Upper lobe of right lung (tissue), 1 donor: ENCODE measurements at regions of chr9 and their contacts with region 1.

Region 1: DNA sequence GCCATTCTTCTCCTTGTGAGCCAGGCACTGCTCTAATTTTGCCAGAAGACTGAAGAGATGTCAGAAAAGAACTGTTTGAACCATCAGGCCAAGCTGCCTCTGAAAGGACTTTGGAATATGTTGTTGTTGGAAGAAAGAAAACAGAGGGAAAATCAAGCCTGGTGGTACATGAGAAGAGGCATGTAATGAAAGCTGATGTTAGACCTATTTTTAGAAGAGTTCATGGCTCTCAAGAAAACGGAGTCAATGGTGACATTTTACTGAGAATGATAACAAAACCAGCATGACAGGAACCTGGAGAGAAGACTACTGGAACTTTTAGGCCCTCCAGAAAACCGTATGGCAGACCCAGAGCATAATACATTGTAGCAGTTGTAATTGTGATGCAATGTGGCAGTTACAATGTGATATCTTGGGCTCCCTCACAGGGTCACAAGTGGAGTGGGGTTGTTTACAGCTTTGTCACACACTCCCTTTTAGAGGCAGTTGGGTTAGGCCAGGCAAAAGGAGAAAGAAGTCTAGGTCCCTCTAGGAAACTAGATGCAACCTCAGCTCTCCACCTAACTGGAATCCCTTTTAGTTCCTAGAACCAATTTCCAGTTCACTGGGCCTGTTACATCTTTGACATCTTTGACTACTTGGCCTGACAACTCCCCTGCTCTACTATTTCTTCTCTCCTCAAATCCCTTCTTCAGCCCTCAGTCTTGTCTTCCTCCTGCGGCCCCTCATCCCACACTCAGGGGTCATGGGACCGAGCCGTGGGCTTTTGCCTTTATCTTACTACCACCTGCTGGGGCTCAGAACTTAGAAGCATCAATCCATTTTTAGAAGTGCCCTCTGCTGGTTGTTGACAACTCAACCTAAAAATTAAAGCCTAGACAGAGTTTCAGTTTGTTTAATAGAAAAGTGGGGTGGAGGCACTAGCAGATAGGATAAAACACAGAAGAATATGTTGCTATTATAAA is 61.2 kb upstream of the JAK2 start:
- DNase-seq: no peak
- ATAC-seq: peak; percentile 45
- H3K4me3 ChIP-seq: no peak overlapping the region
- H3K27ac ChIP-seq: no peak overlapping the region
- H3K4me1 ChIP-seq: peaks cover 4% of the 10 kb centered on the region
- H3K27me3 ChIP-seq: no peaks in the 10 kb centered on the region
- CTCF ChIP-seq: peak; percentile 33

Region 2: DNA sequence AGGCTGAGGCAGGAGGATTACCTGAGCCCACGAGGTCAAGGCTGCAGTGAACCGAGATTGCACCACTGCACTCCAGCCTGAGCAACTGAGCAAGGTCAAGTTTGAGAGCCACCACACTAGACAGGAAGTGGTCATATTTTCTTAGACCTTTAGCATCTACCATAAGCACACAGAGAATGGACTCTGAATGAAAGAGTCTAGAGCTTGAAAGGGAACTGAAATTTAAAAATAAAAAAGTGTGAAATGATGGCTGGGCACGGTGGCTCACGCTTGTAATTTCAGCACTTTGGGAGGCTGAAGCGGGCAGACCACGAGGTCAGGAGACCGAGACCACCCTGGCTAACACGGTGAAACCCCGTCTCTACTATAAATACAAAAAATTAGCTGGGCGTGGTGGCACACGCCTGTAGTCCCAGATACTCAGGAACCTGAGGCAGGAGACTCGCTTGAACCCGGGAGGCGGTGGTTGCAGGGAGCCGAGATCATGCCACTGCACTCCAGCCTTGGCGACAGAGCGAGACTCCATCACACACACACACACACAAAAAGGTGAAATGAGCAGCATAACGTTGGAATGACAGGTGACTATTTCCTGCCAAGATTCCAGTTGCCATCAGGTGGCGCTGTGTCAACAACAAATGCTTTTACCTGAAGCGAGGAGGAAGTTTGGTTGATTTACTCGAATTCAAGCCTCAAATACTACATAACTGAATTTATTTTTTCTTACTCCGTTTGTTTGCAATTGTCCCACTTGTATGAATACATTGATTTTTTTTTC is 161.6 kb before region 1 on chr9:
- intact Hi-C with region 1: loop called (anchors 10 kb)
- DNase-seq: peak; percentile 71
- ATAC-seq: peak; percentile 73
- H3K4me3 ChIP-seq: peak overlapping the region; percentile 36
- H3K27ac ChIP-seq: peak overlapping the region; percentile 38
- H3K4me1 ChIP-seq: peaks cover 14% of the 10 kb centered on the region
- H3K27me3 ChIP-seq: no peaks in the 10 kb centered on the region
- CTCF ChIP-seq: peak; percentile 80